MCF 10A (cell line): ENCODE measurements at regions of chr10 and their contacts with region 1.

Region 1: GRCh38 chr10:5813287-5814109 is at the start of gene GDI2:
- DNase-seq: peak; percentile 97
- H3K4me3 Mint-ChIP-seq: peak within 1 kb of the TSS; percentile 84
- H3K27ac Mint-ChIP-seq: peak within 1 kb of the TSS; percentile 30
- H3K4me1 Mint-ChIP-seq: peaks cover 29% of the 10 kb centered on the region
- H3K27me3 Mint-ChIP-seq: no peaks in the 10 kb centered on the region
- CTCF ChIP-seq: no peak
- total RNA-seq, gene GDI2: 173 and 200 TPM in 2 replicates

Region 2: DNA sequence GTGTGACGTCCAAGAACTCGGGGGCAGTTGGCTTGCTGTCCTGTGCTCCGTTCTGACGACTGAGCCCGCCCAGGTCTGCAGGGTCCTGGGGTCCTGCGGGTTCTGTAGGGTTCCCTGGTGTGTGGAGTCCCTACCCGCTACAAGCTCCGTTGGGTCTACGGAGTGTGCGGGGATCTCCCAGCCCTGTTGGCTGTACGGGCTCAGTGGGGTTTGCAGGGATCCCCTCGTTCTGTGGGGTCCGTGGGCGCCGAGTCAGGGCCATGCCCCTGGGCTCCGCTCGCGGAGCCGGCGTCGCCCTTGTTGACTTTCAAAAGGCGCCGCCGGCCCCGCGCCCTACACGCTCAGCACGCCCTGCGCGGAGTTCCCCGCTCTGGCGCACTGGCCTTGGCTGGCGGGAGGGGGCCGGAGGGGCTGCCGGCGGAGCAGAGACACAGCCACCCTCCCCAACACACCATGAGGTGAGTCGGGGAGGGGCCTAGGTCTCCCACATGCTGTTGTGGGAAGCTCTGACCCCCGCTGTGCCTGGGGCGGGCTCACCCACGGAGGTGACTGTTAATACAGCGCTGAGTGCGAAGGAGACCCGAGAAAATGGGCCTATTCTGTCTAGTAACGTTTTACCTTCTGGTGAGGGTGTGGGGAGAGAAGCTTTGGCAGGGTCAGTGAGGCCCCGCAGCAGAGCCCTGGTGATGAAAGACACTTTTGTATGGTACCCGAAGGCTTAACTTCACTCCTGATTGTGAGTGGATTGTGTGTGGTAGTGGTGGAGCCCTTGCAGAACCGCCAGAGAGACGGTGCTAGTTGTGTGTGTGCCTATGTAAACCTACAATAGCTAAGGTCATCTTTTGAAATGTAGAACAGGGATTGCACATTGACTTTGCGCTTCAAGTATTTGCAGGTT is 120.8 kb before region 1 on chr10:
- CTCF ChIA-PET with region 1: interaction called, 3 read pairs
- POLR2A ChIA-PET with region 1: interaction called, 19 read pairs
- intact Hi-C with region 1: loop called (anchors 5 kb)
- DNase-seq: peak; percentile 34
- H3K4me3 Mint-ChIP-seq: peak overlapping the region; percentile 65
- H3K27ac Mint-ChIP-seq: peak overlapping the region; percentile 44
- H3K4me1 Mint-ChIP-seq: peaks cover 19% of the 10 kb centered on the region
- H3K27me3 Mint-ChIP-seq: no peaks in the 10 kb centered on the region
- CTCF ChIP-seq: no peak

Region 3: GRCh38 chr10:5794236-5794635 is 19.3 kb before region 1 on chr10:
- CTCF ChIA-PET with region 1: interaction called, 4 read pairs
- POLR2A ChIA-PET with region 1: interaction called, 28 read pairs
- intact Hi-C with region 1: no loop called
- DNase-seq: no peak
- H3K4me3 Mint-ChIP-seq: no peak overlapping the region
- H3K27ac Mint-ChIP-seq: no peak overlapping the region
- H3K4me1 Mint-ChIP-seq: no peaks in the 10 kb centered on the region
- H3K27me3 Mint-ChIP-seq: no peaks in the 10 kb centered on the region
- CTCF ChIP-seq: no peak

Region 4: GRCh38 chr10:5832936-5833335 is 19.4 kb after region 1 on chr10:
- CTCF ChIA-PET with region 1: no interaction called
- POLR2A ChIA-PET with region 1: no interaction called
- intact Hi-C with region 1: no loop called
- DNase-seq: no peak
- H3K4me3 Mint-ChIP-seq: no peak overlapping the region
- H3K27ac Mint-ChIP-seq: no peak overlapping the region
- H3K4me1 Mint-ChIP-seq: no peaks in the 10 kb centered on the region
- H3K27me3 Mint-ChIP-seq: no peaks in the 10 kb centered on the region
- CTCF ChIP-seq: no peak

Region 5: GRCh38 chr10:5854106-5854570 is 40.6 kb after region 1 on chr10:
- CTCF ChIA-PET with region 1: interaction called, 5 read pairs
- POLR2A ChIA-PET with region 1: interaction called, 3 read pairs
- intact Hi-C with region 1: loop called (anchors 2 kb)
- DNase-seq: no peak
- H3K4me3 Mint-ChIP-seq: no peak overlapping the region
- H3K27ac Mint-ChIP-seq: no peak overlapping the region
- H3K4me1 Mint-ChIP-seq: no peaks in the 10 kb centered on the region
- H3K27me3 Mint-ChIP-seq: no peaks in the 10 kb centered on the region
- CTCF ChIP-seq: no peak

Region 6: GRCh38 chr10:5873515-5873995 is 60.1 kb after region 1 on chr10:
- CTCF ChIA-PET with region 1: interaction called, 3 read pairs
- POLR2A ChIA-PET with region 1: interaction called, 10 read pairs
- intact Hi-C with region 1: loop called (anchors 1 kb)
- DNase-seq: peak; percentile 77
- H3K4me3 Mint-ChIP-seq: no peak overlapping the region
- H3K27ac Mint-ChIP-seq: no peak overlapping the region
- H3K4me1 Mint-ChIP-seq: no peaks in the 10 kb centered on the region
- H3K27me3 Mint-ChIP-seq: no peaks in the 10 kb centered on the region
- CTCF ChIP-seq: peak; percentile 46

Region 7: GRCh38 chr10:5889624-5890451 is 76.3 kb after region 1 on chr10 and contains the starts of genes ANKRD16 and FBH1:
- CTCF ChIA-PET with region 1: interaction called, 3 read pairs
- POLR2A ChIA-PET with region 1: interaction called, 118 read pairs
- intact Hi-C with region 1: loop called (anchors 5 kb)
- DNase-seq: peak; percentile 98
- H3K4me3 Mint-ChIP-seq: peak within 1 kb of the TSS; percentile 80
- H3K27ac Mint-ChIP-seq: peak within 1 kb of the TSS; percentile 49
- H3K4me1 Mint-ChIP-seq: peaks cover 35% of the 10 kb centered on the region
- H3K27me3 Mint-ChIP-seq: no peaks in the 10 kb centered on the region
- CTCF ChIP-seq: no peak
- total RNA-seq, gene ANKRD16: 9.9 and 10.6 TPM in 2 replicates
- total RNA-seq, gene FBH1: 61.8 and 70.5 TPM in 2 replicates